Common myeloid progenitor, CD34-positive (primary cell): ENCODE measurements at regions of chr1 and their contacts with region 1.

Region 1: GRCh38 chr1:223081181-223081994 is 61.7 kb downstream of the TLR5 start:
- DNase-seq: peak; percentile 94 to 96 (median 95)
- H3K4me3 ChIP-seq: peak overlapping the region in 6 of 7 experiments; percentile 47 to 76 (median 65)
- H3K27ac ChIP-seq: no peak overlapping the region
- H3K4me1 ChIP-seq: peaks cover 0 to 3% (median 1%) of the 10 kb centered on the region in 4 experiments
- H3K27me3 ChIP-seq: no peaks in the 10 kb centered on the region

Region 2: GRCh38 chr1:222792744-222793143 is 288.6 kb before region 1 on chr1:
- CTCF ChIA-PET with region 1: interaction called, 17 read pairs
- POLR2A ChIA-PET with region 1: no interaction called
- DNase-seq: peak; percentile 44 to 63 (median 58)
- H3K4me3 ChIP-seq: no peak overlapping the region
- H3K27ac ChIP-seq: no peak overlapping the region
- H3K4me1 ChIP-seq: no peaks in the 10 kb centered on the region
- H3K27me3 ChIP-seq: no peaks in the 10 kb centered on the region

Region 3: GRCh38 chr1:223062177-223062576 is 19.2 kb before region 1 on chr1:
- CTCF ChIA-PET with region 1: no interaction called
- POLR2A ChIA-PET with region 1: no interaction called
- DNase-seq: no peak
- H3K4me3 ChIP-seq: no peak overlapping the region
- H3K27ac ChIP-seq: no peak overlapping the region
- H3K4me1 ChIP-seq: no peaks in the 10 kb centered on the region
- H3K27me3 ChIP-seq: no peaks in the 10 kb centered on the region